ENCODE measurements at regions of chr11 and their contacts with region 1.

Region 1: DNA sequence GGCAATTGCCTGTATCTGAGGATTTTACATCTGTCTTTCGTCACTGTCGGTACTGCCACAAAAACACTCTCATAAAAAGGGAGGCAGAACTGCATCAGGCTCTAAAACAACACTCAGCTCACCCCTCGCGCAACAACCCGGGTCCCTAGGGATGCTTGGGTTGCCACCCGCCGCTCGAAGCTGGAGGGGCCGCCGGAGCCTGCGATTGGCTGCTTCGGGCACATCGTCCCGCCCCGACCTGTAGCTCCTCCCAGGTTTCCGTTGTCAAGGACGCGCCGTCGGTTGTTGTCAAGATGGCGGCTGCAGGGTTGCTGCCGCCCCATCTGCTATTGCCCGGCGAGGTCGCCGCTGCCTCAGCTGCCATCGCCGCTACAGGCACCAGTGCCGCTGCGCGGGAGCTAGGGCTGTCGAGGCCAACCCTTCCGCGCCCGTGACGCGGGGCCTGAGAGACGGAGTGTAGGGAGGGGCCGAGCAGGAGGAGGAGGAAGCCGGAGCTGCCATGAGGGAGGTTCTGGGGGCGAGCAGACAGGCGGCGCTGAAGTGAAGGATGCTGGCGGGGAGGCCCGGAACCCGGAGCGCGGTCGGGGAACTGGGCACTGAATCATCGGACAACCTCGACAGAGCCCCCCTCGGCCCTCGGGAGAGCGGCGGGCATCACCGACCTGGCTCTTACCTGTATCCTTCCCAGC is at the start of gene CEP126:
- DNase-seq: peak; percentile 95
- ATAC-seq: peak; percentile 89
- H3K4me3 ChIP-seq: peak within 1 kb of the TSS; percentile 78
- H3K27ac ChIP-seq: peak within 1 kb of the TSS; percentile 54
- H3K4me1 ChIP-seq: peaks cover 35% of the 10 kb centered on the region
- H3K27me3 ChIP-seq: no peaks in the 10 kb centered on the region
- CTCF ChIP-seq: peak; percentile 58
- total RNA-seq, gene CEP126: 1.0 and 2.5 TPM in 2 replicates

Region 2: DNA sequence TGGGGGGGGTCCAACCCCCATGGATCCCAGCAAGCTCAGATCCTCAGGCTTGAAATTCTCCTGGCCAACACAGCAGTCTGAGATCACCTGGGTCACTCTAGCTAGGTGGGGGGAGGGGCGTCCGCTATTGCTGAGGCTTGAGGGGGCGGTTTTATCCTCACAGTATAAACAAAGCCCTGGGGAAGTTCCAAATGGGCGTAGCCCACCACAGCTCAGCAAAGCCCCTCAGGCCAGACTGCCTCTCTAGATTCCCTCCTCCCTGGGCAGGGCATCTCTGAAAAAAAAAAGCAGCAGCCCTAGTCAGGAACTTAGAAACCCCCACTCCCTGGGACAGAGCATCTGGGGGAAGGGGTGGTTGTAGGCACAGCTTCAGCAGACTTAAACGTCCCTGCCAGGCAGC is 347.8 kb before region 1 on chr11:
- CTCF ChIA-PET with region 1: no interaction called
- POLR2A ChIA-PET with region 1: no interaction called
- intact Hi-C with region 1: no loop called
- DNase-seq: no peak
- ATAC-seq: no peak
- H3K4me3 ChIP-seq: no peak overlapping the region
- H3K27ac ChIP-seq: no peak overlapping the region
- H3K4me1 ChIP-seq: no peaks in the 10 kb centered on the region
- H3K27me3 ChIP-seq: 0 out of 2 replicates have a peak, but pooled peaks cover 14% of the 10 kb centered on the region
- CTCF ChIP-seq: no peak

Region 3: GRCh38 chr11:101945448-101945847 is 30.6 kb after region 1 on chr11:
- CTCF ChIA-PET with region 1: interaction called, 10 read pairs
- POLR2A ChIA-PET with region 1: no interaction called
- intact Hi-C with region 1: no loop called
- DNase-seq: no peak
- ATAC-seq: no peak
- H3K4me3 ChIP-seq: no peak overlapping the region
- H3K27ac ChIP-seq: no peak overlapping the region
- H3K4me1 ChIP-seq: no peaks in the 10 kb centered on the region
- H3K27me3 ChIP-seq: no peaks in the 10 kb centered on the region
- CTCF ChIP-seq: no peak

Region 4: DNA sequence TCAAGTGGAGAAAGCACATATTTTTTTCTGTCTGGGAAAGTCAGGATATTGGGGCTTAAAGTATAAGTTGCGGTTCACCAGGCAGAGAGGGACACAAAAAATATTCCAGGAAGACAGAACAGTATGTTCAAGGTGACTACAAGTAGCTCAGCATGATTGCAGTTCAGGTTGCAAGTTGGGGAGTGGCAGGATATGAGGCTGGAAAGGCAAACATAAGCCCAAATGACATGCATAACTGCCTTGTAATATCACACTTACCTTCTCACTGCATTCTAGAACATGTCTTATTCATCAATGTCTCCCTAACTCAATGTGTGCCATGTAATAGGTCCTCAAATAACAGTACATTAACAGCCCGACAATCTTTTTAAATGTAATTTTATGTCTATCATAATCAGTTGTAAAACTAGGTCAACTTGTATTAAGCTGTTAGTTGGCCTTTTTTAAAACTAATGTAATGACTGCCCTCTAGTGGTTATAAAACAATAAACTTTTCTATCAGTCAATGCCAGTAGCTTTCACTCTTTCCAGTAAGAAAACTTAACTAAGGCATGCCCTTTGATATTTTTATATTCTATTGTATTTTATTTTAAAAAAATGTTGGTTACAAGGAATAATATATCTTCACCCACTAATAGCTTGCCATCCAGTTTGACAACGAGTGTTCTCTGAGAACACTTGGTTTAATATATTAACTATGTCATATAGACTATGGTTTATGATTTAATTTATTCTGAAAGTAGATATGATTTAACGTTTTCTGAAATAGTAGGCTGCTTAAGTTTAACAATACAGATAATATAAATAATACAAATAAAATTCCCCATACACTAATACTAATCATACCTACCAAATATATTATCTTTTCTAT is 92.9 kb after region 1 on chr11:
- CTCF ChIA-PET with region 1: interaction called, 21 read pairs
- POLR2A ChIA-PET with region 1: interaction called, 4 read pairs
- intact Hi-C with region 1: loop called (anchors 1 kb)
- DNase-seq: peak; percentile 96
- ATAC-seq: peak; percentile 75
- H3K4me3 ChIP-seq: peak overlapping the region; percentile 41
- H3K27ac ChIP-seq: peak overlapping the region; percentile 90
- H3K4me1 ChIP-seq: peaks cover 61% of the 10 kb centered on the region
- H3K27me3 ChIP-seq: no peaks in the 10 kb centered on the region
- CTCF ChIP-seq: peak; percentile 85

Region 5: GRCh38 chr11:102268329-102269193 is 353.7 kb after region 1 on chr11:
- CTCF ChIA-PET with region 1: no interaction called
- POLR2A ChIA-PET with region 1: no interaction called
- intact Hi-C with region 1: loop called (anchors 2 kb)
- DNase-seq: peak; percentile 98
- ATAC-seq: peak; percentile 97
- H3K4me3 ChIP-seq: peak overlapping the region; percentile 85
- H3K27ac ChIP-seq: peak overlapping the region; percentile 65
- H3K4me1 ChIP-seq: peaks cover 33% of the 10 kb centered on the region
- H3K27me3 ChIP-seq: no peaks in the 10 kb centered on the region
- CTCF ChIP-seq: peak; percentile 73

Region 6: GRCh38 chr11:102346748-102347461 is 432.0 kb after region 1 on chr11 and contains the start of gene BIRC2:
- CTCF ChIA-PET with region 1: no interaction called
- POLR2A ChIA-PET with region 1: no interaction called
- intact Hi-C with region 1: loop called (anchors 10 kb)
- DNase-seq: peak; percentile 99
- ATAC-seq: peak; percentile 78
- H3K4me3 ChIP-seq: peak within 1 kb of the TSS; percentile 88
- H3K27ac ChIP-seq: peak within 1 kb of the TSS; percentile 90
- H3K4me1 ChIP-seq: peaks cover 34% of the 10 kb centered on the region
- H3K27me3 ChIP-seq: no peaks in the 10 kb centered on the region
- CTCF ChIP-seq: peak; percentile 77
- total RNA-seq, gene BIRC2: 36.1 and 42.6 TPM in 2 replicates